OCI-LY7 (cell line): ENCODE measurements at regions of chr15 and their contacts with region 1.

Region 1: GRCh38 chr15:94119923-94120775 is 111.2 kb upstream of the MCTP2 start:
- DNase-seq: peak; percentile 79
- H3K4me3 ChIP-seq: no peak overlapping the region
- H3K27ac ChIP-seq: no peak overlapping the region
- H3K4me1 ChIP-seq: no peaks in the 10 kb centered on the region
- CTCF ChIP-seq: peak; percentile 98

Region 2: GRCh38 chr15:93030430-93031105 is 1089.6 kb before region 1 on chr15:
- CTCF ChIA-PET with region 1: no interaction called
- POLR2A ChIA-PET with region 1: no interaction called
- intact Hi-C with region 1: loop called (anchors 5 kb)
- DNase-seq: peak; percentile 69
- H3K4me3 ChIP-seq: no peak overlapping the region
- H3K27ac ChIP-seq: no peak overlapping the region
- H3K4me1 ChIP-seq: no peaks in the 10 kb centered on the region
- CTCF ChIP-seq: peak; percentile 87

Region 3: GRCh38 chr15:93087825-93088199 is 1032.3 kb before region 1 on chr15:
- CTCF ChIA-PET with region 1: interaction called, 3 read pairs
- POLR2A ChIA-PET with region 1: no interaction called
- intact Hi-C with region 1: loop called (anchors 2 kb)
- DNase-seq: peak; percentile 57
- H3K4me3 ChIP-seq: no peak overlapping the region
- H3K27ac ChIP-seq: no peak overlapping the region
- H3K4me1 ChIP-seq: no peaks in the 10 kb centered on the region
- CTCF ChIP-seq: peak; percentile 96

Region 4: GRCh38 chr15:93823971-93824913 is 295.9 kb before region 1 on chr15:
- CTCF ChIA-PET with region 1: no interaction called
- POLR2A ChIA-PET with region 1: no interaction called
- intact Hi-C with region 1: no loop called
- DNase-seq: no peak
- H3K4me3 ChIP-seq: no peak overlapping the region
- H3K27ac ChIP-seq: no peak overlapping the region
- H3K4me1 ChIP-seq: no peaks in the 10 kb centered on the region
- CTCF ChIP-seq: no peak

Region 5: DNA sequence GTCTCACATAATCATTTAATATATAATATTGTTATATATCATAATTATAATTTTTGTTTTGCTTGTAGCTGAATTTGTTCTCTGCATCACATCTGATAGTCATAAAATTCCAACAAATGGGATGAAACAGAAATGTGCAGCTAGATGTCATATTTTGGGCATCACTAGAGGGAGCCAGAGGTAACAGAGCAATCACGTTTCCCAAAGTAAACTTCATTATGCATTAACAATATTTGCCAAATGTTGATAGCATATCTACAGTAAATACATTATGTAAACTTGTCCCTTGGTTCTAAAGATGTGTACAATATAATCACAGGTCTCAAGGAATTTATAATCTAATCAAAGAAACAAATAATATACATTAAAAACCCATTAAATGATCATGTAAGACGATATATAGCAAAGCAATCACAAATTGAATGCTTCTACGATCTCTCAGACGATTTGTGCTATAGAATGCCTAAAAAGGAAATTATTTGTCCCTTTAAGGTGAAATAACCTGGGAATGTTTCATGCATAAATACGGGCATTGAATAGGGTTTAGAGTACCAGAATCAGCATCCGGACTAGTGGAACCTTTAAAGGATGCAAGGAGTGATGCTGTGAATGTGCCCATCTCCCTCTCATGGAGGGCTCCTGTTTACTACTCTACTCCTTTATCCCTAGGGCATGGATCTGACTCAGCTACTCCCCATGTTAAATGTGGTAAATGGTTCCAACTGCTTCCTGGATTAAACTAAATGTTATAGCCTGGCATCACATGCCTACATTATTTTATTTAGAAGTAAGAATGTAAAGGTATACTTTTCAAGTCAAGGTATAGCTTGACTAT is 122.8 kb before region 1 on chr15:
- CTCF ChIA-PET with region 1: no interaction called
- POLR2A ChIA-PET with region 1: no interaction called
- intact Hi-C with region 1: loop called (anchors 5 kb)
- DNase-seq: peak; percentile 21
- H3K4me3 ChIP-seq: no peak overlapping the region
- H3K27ac ChIP-seq: no peak overlapping the region
- H3K4me1 ChIP-seq: no peaks in the 10 kb centered on the region
- CTCF ChIP-seq: peak; percentile 91